ENCODE measurements at regions of chr4 and their contacts with region 1.

Region 1: GRCh38 chr4:104394406-104395167 is 100.1 kb downstream of the CXXC4 start:
- DNase-seq: no peak
- H3K4me3 ChIP-seq: no peak overlapping the region
- H3K27ac ChIP-seq: no peak overlapping the region
- H3K4me1 ChIP-seq: no peaks in the 10 kb centered on the region
- CTCF ChIP-seq: no peak

Region 2: GRCh38 chr4:104649631-104650030 is 255.0 kb after region 1 on chr4:
- CTCF ChIA-PET with region 1: no interaction called
- POLR2A ChIA-PET with region 1: no interaction called
- intact Hi-C with region 1: no loop called
- DNase-seq: no peak
- H3K4me3 ChIP-seq: no peak overlapping the region
- H3K27ac ChIP-seq: no peak overlapping the region
- H3K4me1 ChIP-seq: no peaks in the 10 kb centered on the region
- CTCF ChIP-seq: no peak

Region 3: GRCh38 chr4:104848597-104849225 is 454.1 kb after region 1 on chr4:
- CTCF ChIA-PET with region 1: no interaction called
- POLR2A ChIA-PET with region 1: interaction called, 11 read pairs
- intact Hi-C with region 1: no loop called
- DNase-seq: no peak
- H3K4me3 ChIP-seq: no peak overlapping the region
- H3K27ac ChIP-seq: no peak overlapping the region
- H3K4me1 ChIP-seq: no peaks in the 10 kb centered on the region
- CTCF ChIP-seq: no peak

Measured in OCI-LY7 (cell line).